Adrenal gland (tissue), 19 donors: ENCODE measurements at regions of chr7 and their contacts with region 1.

Region 1: GRCh38 chr7:88243345-88243909 is 23.6 kb upstream of the SRI start:
- DNase-seq: peak; percentile 34 to 76 (median 51)
- H3K4me3 ChIP-seq: no peak overlapping the region
- H3K27ac ChIP-seq: no peak overlapping the region
- H3K4me1 ChIP-seq: peaks cover 0 to 5% of the 10 kb centered on the region in 2 donors
- H3K27me3 ChIP-seq: no peaks in the 10 kb centered on the region
- CTCF ChIP-seq: peak; percentile 61 to 99 (median 91)
- POLR2A ChIP-seq: no peak

Region 2: DNA sequence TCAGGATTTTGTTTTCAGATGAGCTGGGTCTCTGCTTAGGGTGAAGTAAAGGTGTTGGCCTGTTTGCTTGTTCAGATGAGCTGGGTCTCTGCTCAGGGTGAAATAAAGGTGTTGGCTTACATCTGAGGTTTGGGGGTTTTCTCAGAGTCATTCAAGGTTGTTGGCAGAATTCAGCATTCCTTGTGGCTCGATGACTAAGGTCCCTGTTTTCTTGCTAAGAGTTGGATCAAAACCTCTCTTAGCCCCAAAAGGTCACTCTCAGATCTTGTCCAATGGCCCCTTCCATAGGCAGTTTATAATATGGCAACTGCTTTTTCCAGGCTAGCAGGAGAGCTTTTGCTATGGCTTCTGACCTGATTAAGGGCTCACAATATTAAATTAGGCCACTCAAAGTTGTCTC is 202.7 kb before region 1 on chr7:
- intact Hi-C with region 1: no loop called
- DNase-seq: peak in 1 of 7 donors; percentile 4
- H3K4me3 ChIP-seq: no peak overlapping the region
- H3K27ac ChIP-seq: no peak overlapping the region
- H3K4me1 ChIP-seq: peaks cover 0 to 28% of the 10 kb centered on the region in 2 donors
- H3K27me3 ChIP-seq: no peaks in the 10 kb centered on the region
- CTCF ChIP-seq: no peak
- POLR2A ChIP-seq: no peak

Region 3: DNA sequence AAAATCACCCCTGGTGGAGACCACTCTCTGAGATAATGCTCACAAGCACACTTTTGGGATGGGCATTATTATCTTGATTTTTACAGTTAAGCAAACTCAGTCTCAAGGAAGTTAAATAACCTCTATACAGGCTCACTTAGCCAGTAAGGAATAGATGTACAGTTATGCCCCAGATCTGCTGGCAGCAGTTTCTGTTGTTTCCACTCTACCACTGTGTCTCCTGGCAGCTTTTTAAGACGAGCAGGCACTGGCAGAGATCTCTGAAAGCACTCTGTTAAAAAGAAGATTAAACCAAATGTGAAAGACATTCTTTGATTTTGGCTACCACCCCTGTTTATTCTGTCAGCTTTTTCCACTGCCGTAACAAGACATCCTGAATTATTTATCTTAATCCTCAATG is 96.8 kb before region 1 on chr7:
- intact Hi-C with region 1: no loop called
- DNase-seq: no peak
- H3K4me3 ChIP-seq: no peak overlapping the region
- H3K27ac ChIP-seq: no peak overlapping the region
- H3K4me1 ChIP-seq: no peaks in the 10 kb centered on the region
- H3K27me3 ChIP-seq: no peaks in the 10 kb centered on the region
- CTCF ChIP-seq: no peak
- POLR2A ChIP-seq: no peak

Region 4: GRCh38 chr7:88357781-88358525 is 114.5 kb after region 1 on chr7:
- intact Hi-C with region 1: loop called (anchors 5 kb)
- DNase-seq: peak in 3 of 7 donors; percentile 16 to 53 (median 24)
- H3K4me3 ChIP-seq: peak overlapping the region in 1 of 4 donors; percentile 22
- H3K27ac ChIP-seq: no peak overlapping the region
- H3K4me1 ChIP-seq: peaks cover 0 to 4% of the 10 kb centered on the region in 2 donors
- H3K27me3 ChIP-seq: no peaks in the 10 kb centered on the region
- CTCF ChIP-seq: peak; percentile 36 to 70 (median 58)
- POLR2A ChIP-seq: no peak